Caco-2 (cell line): ENCODE measurements at regions of chr17 and their contacts with region 1.

Region 1: GRCh38 chr17:59230764-59231163 is 10.5 kb downstream of the GDPD1 start:
- DNase-seq: no peak
- H3K4me3 ChIP-seq: no peak overlapping the region
- H3K4me3 Mint-ChIP-seq: no peak overlapping the region
- H3K27ac Mint-ChIP-seq: no peak overlapping the region
- H3K4me1 ChIP-seq: no peaks in the 10 kb centered on the region
- H3K4me1 Mint-ChIP-seq: no peaks in the 10 kb centered on the region
- H3K27me3 ChIP-seq: no peaks in the 10 kb centered on the region
- H3K27me3 Mint-ChIP-seq: no peaks in the 10 kb centered on the region
- CTCF ChIP-seq: no peak

Region 2: DNA sequence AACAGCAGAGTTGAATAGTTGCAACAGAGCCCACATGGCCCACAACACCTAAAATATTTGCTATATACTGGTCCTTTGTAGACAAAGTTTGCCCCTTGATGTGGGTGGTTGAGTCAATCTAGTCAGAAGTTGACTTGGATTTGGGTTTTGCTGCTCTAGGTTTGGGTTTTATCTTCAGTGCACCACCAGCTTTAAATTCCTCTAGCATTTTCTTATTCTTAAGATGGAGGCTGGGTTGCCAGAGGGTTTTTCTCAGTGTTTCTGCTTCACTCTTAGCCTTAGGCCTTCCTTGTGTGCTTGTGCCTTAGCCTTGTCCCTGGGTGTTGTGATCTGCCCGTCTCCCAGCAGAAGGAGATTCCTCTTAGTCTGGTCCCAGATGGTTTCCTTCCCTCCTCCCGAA is 1536.7 kb before region 1 on chr17:
- CTCF ChIA-PET with region 1: interaction called, 11 read pairs
- POLR2A ChIA-PET with region 1: no interaction called
- intact Hi-C with region 1: no loop called
- DNase-seq: no peak
- H3K4me3 ChIP-seq: no peak overlapping the region
- H3K4me3 Mint-ChIP-seq: no peak overlapping the region
- H3K27ac Mint-ChIP-seq: no peak overlapping the region
- H3K4me1 ChIP-seq: peaks cover 10% of the 10 kb centered on the region
- H3K4me1 Mint-ChIP-seq: no peaks in the 10 kb centered on the region
- H3K27me3 ChIP-seq: no peaks in the 10 kb centered on the region
- H3K27me3 Mint-ChIP-seq: no peaks in the 10 kb centered on the region
- CTCF ChIP-seq: no peak